MCF 10A (cell line): ENCODE measurements at regions of chr12 and their contacts with region 1.

Region 1: DNA sequence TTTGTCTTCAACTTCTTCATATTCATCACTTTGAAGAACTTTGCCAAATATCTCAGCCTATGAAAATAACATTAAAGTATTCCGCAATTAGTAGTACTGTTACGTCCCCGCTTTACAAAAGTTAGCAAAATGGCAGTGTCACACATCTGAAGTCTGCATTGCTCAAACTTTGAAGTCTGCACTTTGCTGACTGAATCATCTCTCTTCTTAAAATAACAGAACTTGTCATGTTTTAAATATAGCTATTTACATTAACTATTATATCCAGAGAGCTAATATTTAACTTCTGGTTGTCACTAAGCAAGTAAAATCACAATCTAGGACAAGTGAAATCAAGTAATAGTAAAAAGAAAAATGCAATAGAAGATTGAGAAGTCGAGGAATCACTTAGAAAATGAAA is 34.5 kb downstream of the IPO8 start:
- DNase-seq: no peak
- H3K4me3 Mint-ChIP-seq: no peak overlapping the region
- H3K27ac Mint-ChIP-seq: no peak overlapping the region
- H3K4me1 Mint-ChIP-seq: no peaks in the 10 kb centered on the region
- H3K27me3 Mint-ChIP-seq: no peaks in the 10 kb centered on the region
- CTCF ChIP-seq: no peak

Region 2: GRCh38 chr12:29505122-29505521 is 1156.1 kb before region 1 on chr12:
- CTCF ChIA-PET with region 1: no interaction called
- POLR2A ChIA-PET with region 1: no interaction called
- intact Hi-C with region 1: loop called (anchors 10 kb)
- DNase-seq: no peak
- H3K4me3 Mint-ChIP-seq: no peak overlapping the region
- H3K27ac Mint-ChIP-seq: no peak overlapping the region
- H3K4me1 Mint-ChIP-seq: no peaks in the 10 kb centered on the region
- H3K27me3 Mint-ChIP-seq: no peaks in the 10 kb centered on the region
- CTCF ChIP-seq: no peak